CD4-positive, alpha-beta T cell (primary cell): ENCODE measurements at regions of chrX and their contacts with region 1.

Region 1: GRCh38 chrX:131854581-131854980 is 168.5 kb upstream of the STK26 start:
- DNase-seq: peak in 3 of 14 experiments; percentile 28 to 47 (median 44)
- ATAC-seq: no peak
- H3K4me3 ChIP-seq: no peak overlapping the region
- H3K4me3 Mint-ChIP-seq: no peak overlapping the region
- H3K27ac ChIP-seq: no peak overlapping the region
- H3K27ac Mint-ChIP-seq: no peak overlapping the region
- H3K4me1 ChIP-seq: no peaks in the 10 kb centered on the region
- H3K4me1 Mint-ChIP-seq: no peaks in the 10 kb centered on the region
- H3K27me3 ChIP-seq: no peaks in the 10 kb centered on the region
- H3K27me3 Mint-ChIP-seq: no peaks in the 10 kb centered on the region
- CTCF ChIP-seq: peak; percentile 55

Region 2: GRCh38 chrX:131830400-131831184 is 24.0 kb before region 1 on chrX:
- CTCF ChIA-PET with region 1: no interaction called
- POLR2A ChIA-PET with region 1: no interaction called
- intact Hi-C with region 1: no loop called
- DNase-seq: peak in 10 of 14 experiments; percentile 8 to 80 (median 36)
- ATAC-seq: peak; percentile 62
- H3K4me3 ChIP-seq: peak overlapping the region; percentile 37
- H3K4me3 Mint-ChIP-seq: peak overlapping the region; percentile 82
- H3K27ac ChIP-seq: peak overlapping the region in 1 of 2 donors; percentile 58
- H3K27ac Mint-ChIP-seq: peak overlapping the region; percentile 86
- H3K4me1 ChIP-seq: peaks cover 19% of the 10 kb centered on the region
- H3K4me1 Mint-ChIP-seq: peaks cover 33% of the 10 kb centered on the region
- H3K27me3 ChIP-seq: no peaks in the 10 kb centered on the region
- H3K27me3 Mint-ChIP-seq: no peaks in the 10 kb centered on the region
- CTCF ChIP-seq: no peak

Region 3: GRCh38 chrX:132299561-132299960 is 445.0 kb after region 1 on chrX:
- CTCF ChIA-PET with region 1: no interaction called
- POLR2A ChIA-PET with region 1: no interaction called
- intact Hi-C with region 1: no loop called
- DNase-seq: no peak
- ATAC-seq: no peak
- H3K4me3 ChIP-seq: no peak overlapping the region
- H3K4me3 Mint-ChIP-seq: no peak overlapping the region
- H3K27ac ChIP-seq: no peak overlapping the region
- H3K27ac Mint-ChIP-seq: no peak overlapping the region
- H3K4me1 ChIP-seq: no peaks in the 10 kb centered on the region
- H3K4me1 Mint-ChIP-seq: no peaks in the 10 kb centered on the region
- H3K27me3 ChIP-seq: no peaks in the 10 kb centered on the region
- H3K27me3 Mint-ChIP-seq: no peaks in the 10 kb centered on the region
- CTCF ChIP-seq: no peak

Region 4: DNA sequence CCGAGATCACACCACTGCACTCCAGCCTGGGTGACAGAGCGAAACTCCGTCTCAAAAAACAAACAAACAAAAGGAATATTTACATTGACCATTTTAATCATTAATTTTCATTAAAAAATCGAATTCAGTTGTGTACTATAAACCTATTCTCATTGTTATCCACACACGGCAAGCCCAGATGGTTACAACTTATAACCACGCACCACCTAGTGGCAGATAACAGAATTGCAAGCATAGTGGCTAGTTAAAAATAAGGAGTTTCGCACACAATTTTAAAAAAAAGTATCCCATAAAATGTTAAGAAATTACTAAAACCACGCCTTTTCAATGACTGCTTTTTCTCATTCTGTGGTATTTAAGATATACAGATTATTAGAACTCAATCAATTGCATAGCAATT is 608.8 kb after region 1 on chrX:
- CTCF ChIA-PET with region 1: no interaction called
- POLR2A ChIA-PET with region 1: no interaction called
- intact Hi-C with region 1: loop called in 1 of 2 experiments (anchors 10 kb)
- DNase-seq: peak in 4 of 14 experiments; percentile 16 to 43 (median 36)
- ATAC-seq: no peak
- H3K4me3 ChIP-seq: no peak overlapping the region
- H3K4me3 Mint-ChIP-seq: no peak overlapping the region
- H3K27ac ChIP-seq: no peak overlapping the region
- H3K27ac Mint-ChIP-seq: no peak overlapping the region
- H3K4me1 ChIP-seq: no peaks in the 10 kb centered on the region
- H3K4me1 Mint-ChIP-seq: no peaks in the 10 kb centered on the region
- H3K27me3 ChIP-seq: no peaks in the 10 kb centered on the region
- H3K27me3 Mint-ChIP-seq: no peaks in the 10 kb centered on the region
- CTCF ChIP-seq: peak; percentile 53

Region 5: GRCh38 chrX:133005066-133005465 is 1150.5 kb after region 1 on chrX:
- CTCF ChIA-PET with region 1: no interaction called
- POLR2A ChIA-PET with region 1: no interaction called
- intact Hi-C with region 1: no loop called
- DNase-seq: no peak
- ATAC-seq: no peak
- H3K4me3 ChIP-seq: no peak overlapping the region
- H3K4me3 Mint-ChIP-seq: no peak overlapping the region
- H3K27ac ChIP-seq: no peak overlapping the region
- H3K27ac Mint-ChIP-seq: no peak overlapping the region
- H3K4me1 ChIP-seq: no peaks in the 10 kb centered on the region
- H3K4me1 Mint-ChIP-seq: no peaks in the 10 kb centered on the region
- H3K27me3 ChIP-seq: no peaks in the 10 kb centered on the region
- H3K27me3 Mint-ChIP-seq: peaks cover 9% of the 10 kb centered on the region
- CTCF ChIP-seq: no peak